SK-N-SH (cell line): ENCODE measurements at regions of chr9 and their contacts with region 1.

Region 1: DNA sequence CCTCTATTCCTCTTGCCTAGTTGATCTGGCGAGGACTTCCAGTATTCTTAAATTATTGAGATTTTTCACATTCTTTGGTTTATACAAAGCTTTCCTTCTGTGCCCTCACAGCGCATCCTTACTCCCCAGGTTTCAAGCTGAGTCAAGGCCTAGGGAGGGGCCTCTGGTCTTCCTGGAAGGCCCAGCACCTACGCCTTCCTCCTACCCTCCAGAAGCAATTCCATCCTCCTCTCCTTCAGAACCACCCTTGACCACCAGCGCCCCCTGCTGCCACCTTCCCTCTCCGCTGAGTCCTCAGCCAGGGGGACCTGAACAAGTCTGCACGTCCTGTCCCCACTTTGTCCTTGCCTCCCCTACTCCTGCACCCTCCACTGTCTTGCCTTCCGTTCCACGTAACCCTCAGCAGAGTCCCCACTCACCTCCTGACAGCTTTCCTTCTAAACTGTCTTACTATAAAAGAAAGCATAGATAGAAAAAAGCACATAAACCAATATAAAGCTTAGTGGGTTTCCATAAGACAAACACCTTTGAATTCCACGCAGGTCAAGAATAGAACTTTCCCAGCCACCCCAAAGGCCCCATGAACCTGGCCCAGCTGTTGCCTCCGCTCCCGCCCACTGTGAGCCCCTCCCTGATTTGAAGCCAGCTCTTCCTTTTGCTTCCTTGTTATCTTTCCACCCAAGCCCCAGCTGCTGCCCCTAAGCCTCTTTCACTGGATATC is 63.0 kb upstream of the CTSL start:
- DNase-seq: peak; percentile 89
- H3K4me3 ChIP-seq: no peak overlapping the region; a peak in 1 of 4 replicates
- H3K27ac ChIP-seq: no peak overlapping the region
- H3K4me1 ChIP-seq: no peaks in the 10 kb centered on the region; a peak in 2 of 4 replicates
- H3K27me3 ChIP-seq: no peaks in the 10 kb centered on the region
- CTCF ChIP-seq: peak; percentile 70
- EP300 ChIP-seq: no peak
- RAD21 ChIP-seq: peak; percentile 93

Region 2: GRCh38 chr9:87336914-87337333 is 326.0 kb before region 1 on chr9:
- CTCF ChIA-PET with region 1: interaction called, 56 read pairs
- POLR2A ChIA-PET with region 1: no interaction called
- DNase-seq: peak; percentile 60
- H3K4me3 ChIP-seq: peak overlapping the region; percentile 53 to 64
- H3K27ac ChIP-seq: no peak overlapping the region
- H3K4me1 ChIP-seq: peaks cover 9 to 11% of the 10 kb centered on the region in 2 experiments; a peak in 2 of 4 replicates
- H3K27me3 ChIP-seq: peaks cover 6% of the 10 kb centered on the region; the same call in 1 of the 2 replicates
- CTCF ChIP-seq: peak; percentile 76
- EP300 ChIP-seq: no peak; a peak in 1 of 4 replicates
- RAD21 ChIP-seq: peak; percentile 94

Region 3: DNA sequence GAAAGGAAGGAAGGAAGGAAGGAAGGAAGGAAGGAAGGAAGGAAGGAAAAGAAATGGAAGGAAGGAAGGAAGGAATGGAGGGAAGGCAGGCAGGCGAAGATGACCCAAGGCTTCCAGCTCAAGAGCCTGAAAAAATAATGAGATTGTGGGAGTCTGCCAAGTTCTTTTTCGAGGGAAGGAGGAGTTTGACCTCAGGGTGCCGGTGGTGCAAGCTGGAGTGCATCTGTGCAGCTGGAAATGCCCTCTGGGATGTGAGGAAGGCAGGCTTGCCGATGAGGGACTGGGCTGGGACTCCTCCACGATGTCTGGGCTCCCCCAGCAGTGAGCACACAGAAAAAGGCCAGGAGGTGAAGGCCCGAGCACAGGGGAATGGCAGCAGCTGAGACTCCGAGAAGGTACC is 320.2 kb before region 1 on chr9:
- CTCF ChIA-PET with region 1: interaction called, 56 read pairs
- POLR2A ChIA-PET with region 1: no interaction called
- DNase-seq: no peak
- H3K4me3 ChIP-seq: no peak overlapping the region
- H3K27ac ChIP-seq: no peak overlapping the region
- H3K4me1 ChIP-seq: peaks cover 1% of the 10 kb centered on the region in 2 experiments; a peak in 2 of 4 replicates
- H3K27me3 ChIP-seq: no peaks in the 10 kb centered on the region; the same call in 1 of the 2 replicates
- CTCF ChIP-seq: no peak
- EP300 ChIP-seq: no peak
- RAD21 ChIP-seq: no peak

Region 4: DNA sequence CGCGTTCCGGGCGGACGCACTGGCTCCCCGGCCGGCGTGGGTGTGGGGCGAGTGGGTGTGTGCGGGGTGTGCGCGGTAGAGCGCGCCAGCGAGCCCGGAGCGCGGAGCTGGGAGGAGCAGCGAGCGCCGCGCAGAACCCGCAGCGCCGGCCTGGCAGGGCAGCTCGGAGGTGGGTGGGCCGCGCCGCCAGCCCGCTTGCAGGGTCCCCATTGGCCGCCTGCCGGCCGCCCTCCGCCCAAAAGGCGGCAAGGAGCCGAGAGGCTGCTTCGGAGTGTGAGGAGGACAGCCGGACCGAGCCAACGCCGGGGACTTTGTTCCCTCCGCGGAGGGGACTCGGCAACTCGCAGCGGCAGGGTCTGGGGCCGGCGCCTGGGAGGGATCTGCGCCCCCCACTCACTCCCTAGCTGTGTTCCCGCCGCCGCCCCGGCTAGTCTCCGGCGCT is 165.3 kb before region 1 on chr9 and contains the start of gene DAPK1:
- CTCF ChIA-PET with region 1: interaction called, 20 read pairs
- POLR2A ChIA-PET with region 1: interaction called, 5 read pairs
- DNase-seq: peak; percentile 95
- H3K4me3 ChIP-seq: peak within 1 kb of the TSS; percentile 48 to 55; a peak in 3 of 4 replicates
- H3K27ac ChIP-seq: peak within 1 kb of the TSS in 1 of 2 experiments; percentile 81; a peak in 2 of 4 replicates
- H3K4me1 ChIP-seq: peaks cover 4 to 15% of the 10 kb centered on the region in 2 experiments; a peak in 3 of 4 replicates
- H3K27me3 ChIP-seq: peaks cover 17% of the 10 kb centered on the region; the same call in 1 of the 2 replicates
- CTCF ChIP-seq: no peak
- EP300 ChIP-seq: no peak
- RAD21 ChIP-seq: peak; percentile 37
- polyA plus RNA-seq, gene DAPK1: 0.61 and 0.70 TPM in 2 replicates

Region 5: GRCh38 chr9:87622923-87623322 is 40.0 kb before region 1 on chr9:
- CTCF ChIA-PET with region 1: interaction called, 10 read pairs
- POLR2A ChIA-PET with region 1: no interaction called
- DNase-seq: no peak
- H3K4me3 ChIP-seq: no peak overlapping the region
- H3K27ac ChIP-seq: peak overlapping the region in 1 of 2 experiments; percentile 44; a peak in 2 of 4 replicates
- H3K4me1 ChIP-seq: peaks cover 0 to 47% of the 10 kb centered on the region in 2 experiments; a peak in 2 of 4 replicates
- H3K27me3 ChIP-seq: no peaks in the 10 kb centered on the region
- CTCF ChIP-seq: no peak
- EP300 ChIP-seq: peak in 1 of 2 experiments; percentile 13; a peak in 1 of 4 replicates
- RAD21 ChIP-seq: no peak

Region 6: DNA sequence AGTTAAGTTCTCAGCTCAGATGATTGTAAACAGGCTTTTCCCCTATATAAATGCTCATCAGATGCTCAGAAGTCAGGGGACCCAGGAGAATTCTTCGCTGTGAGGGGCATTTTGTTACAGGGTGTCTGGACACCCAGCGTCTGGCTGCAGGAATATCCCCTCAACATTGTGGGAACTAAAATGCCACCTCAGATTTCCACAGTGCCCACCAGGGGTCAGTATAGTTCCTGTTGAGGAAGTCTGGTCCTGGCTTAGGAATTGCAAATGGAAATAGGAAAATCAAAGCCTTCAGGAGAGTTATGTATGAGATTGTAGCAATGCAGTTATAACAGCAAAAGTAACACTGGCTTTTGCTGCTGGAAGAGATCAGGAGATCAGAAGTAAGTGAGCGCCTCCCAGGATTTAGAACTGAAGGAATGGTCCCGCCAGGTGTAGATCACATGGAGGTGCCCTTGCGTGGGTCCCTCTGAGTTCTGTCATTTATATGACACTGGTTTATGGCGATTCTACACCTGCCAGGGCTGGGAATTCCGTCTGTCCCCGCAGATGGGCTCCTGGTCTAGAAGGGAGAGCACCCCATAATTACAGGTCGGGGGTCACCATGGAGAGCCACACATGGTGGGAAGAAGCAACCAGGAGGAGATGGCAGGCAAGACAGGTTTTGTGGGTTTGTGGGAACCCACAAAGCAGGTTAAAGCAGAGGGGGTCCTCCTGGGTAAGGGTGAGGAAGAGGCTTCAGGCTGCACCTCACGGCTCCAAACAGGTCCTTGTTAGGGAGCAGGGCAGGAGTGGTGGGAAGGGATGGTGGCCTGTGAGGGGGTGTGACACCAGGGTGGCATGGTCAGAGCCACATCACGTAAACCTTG is 15.9 kb after region 1 on chr9:
- CTCF ChIA-PET with region 1: interaction called, 17 read pairs
- POLR2A ChIA-PET with region 1: no interaction called
- DNase-seq: peak; percentile 84
- H3K4me3 ChIP-seq: peak overlapping the region in 1 of 2 experiments; percentile 24; a peak in 1 of 4 replicates
- H3K27ac ChIP-seq: no peak overlapping the region
- H3K4me1 ChIP-seq: no peaks in the 10 kb centered on the region; a peak in 1 of 4 replicates
- H3K27me3 ChIP-seq: no peaks in the 10 kb centered on the region
- CTCF ChIP-seq: peak; percentile 83
- EP300 ChIP-seq: no peak
- RAD21 ChIP-seq: peak; percentile 84

Region 7: DNA sequence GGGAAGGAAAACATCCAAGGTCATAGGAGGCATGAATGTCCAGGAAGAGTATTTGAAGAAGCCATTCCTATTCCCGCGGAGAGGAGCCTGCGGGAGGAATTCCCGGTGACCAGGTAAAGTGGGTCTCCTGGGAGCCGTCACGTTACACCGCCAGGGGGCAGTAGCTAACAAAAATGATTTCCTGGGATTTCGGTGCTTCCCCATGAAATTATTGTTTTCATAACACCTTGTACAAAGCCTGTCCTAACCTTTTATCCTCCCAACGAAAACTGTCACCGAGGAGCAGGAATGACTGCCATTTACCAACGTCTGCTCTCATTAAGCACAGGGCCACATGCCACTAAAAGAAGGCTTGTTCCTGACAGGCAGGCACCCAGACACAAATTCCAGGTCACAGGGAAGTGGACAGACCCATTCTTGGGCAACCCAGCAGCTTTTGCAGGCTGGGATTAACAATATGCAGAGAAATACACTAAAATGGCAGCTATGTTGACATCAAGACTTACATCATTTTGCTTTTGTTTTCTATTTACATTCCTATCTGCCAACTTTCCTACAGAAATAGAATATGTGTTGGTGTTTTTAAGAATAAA is 21.8 kb after region 1 on chr9:
- CTCF ChIA-PET with region 1: interaction called, 12 read pairs
- POLR2A ChIA-PET with region 1: no interaction called
- DNase-seq: peak; percentile 77
- H3K4me3 ChIP-seq: no peak overlapping the region
- H3K27ac ChIP-seq: no peak overlapping the region
- H3K4me1 ChIP-seq: no peaks in the 10 kb centered on the region
- H3K27me3 ChIP-seq: no peaks in the 10 kb centered on the region
- CTCF ChIP-seq: peak; percentile 82
- EP300 ChIP-seq: no peak
- RAD21 ChIP-seq: peak; percentile 74

Region 8: GRCh38 chr9:87812375-87813118 is 149.6 kb after region 1 on chr9:
- CTCF ChIA-PET with region 1: no interaction called
- POLR2A ChIA-PET with region 1: no interaction called
- DNase-seq: peak; percentile 60
- H3K4me3 ChIP-seq: peak overlapping the region in 1 of 2 experiments; percentile 5; a peak in 1 of 4 replicates
- H3K27ac ChIP-seq: no peak overlapping the region
- H3K4me1 ChIP-seq: no peaks in the 10 kb centered on the region
- H3K27me3 ChIP-seq: no peaks in the 10 kb centered on the region
- CTCF ChIP-seq: peak; percentile 78
- EP300 ChIP-seq: no peak
- RAD21 ChIP-seq: peak; percentile 81

Region 9: GRCh38 chr9:88011005-88011766 is 348.2 kb after region 1 on chr9:
- CTCF ChIA-PET with region 1: no interaction called
- POLR2A ChIA-PET with region 1: no interaction called
- DNase-seq: peak; percentile 42
- H3K4me3 ChIP-seq: no peak overlapping the region
- H3K27ac ChIP-seq: no peak overlapping the region
- H3K4me1 ChIP-seq: no peaks in the 10 kb centered on the region
- H3K27me3 ChIP-seq: no peaks in the 10 kb centered on the region
- CTCF ChIP-seq: no peak; the same call in 1 of the 2 replicates
- EP300 ChIP-seq: no peak
- RAD21 ChIP-seq: peak; percentile 40; the same call in 1 of the 2 replicates